KBM-7 (cell line): ENCODE measurements at regions of chr15 and their contacts with region 1.

Region 1: GRCh38 chr15:90648137-90649070 is 68.7 kb upstream of the BLM start:
- DNase-seq: peak; percentile 97

Region 2: DNA sequence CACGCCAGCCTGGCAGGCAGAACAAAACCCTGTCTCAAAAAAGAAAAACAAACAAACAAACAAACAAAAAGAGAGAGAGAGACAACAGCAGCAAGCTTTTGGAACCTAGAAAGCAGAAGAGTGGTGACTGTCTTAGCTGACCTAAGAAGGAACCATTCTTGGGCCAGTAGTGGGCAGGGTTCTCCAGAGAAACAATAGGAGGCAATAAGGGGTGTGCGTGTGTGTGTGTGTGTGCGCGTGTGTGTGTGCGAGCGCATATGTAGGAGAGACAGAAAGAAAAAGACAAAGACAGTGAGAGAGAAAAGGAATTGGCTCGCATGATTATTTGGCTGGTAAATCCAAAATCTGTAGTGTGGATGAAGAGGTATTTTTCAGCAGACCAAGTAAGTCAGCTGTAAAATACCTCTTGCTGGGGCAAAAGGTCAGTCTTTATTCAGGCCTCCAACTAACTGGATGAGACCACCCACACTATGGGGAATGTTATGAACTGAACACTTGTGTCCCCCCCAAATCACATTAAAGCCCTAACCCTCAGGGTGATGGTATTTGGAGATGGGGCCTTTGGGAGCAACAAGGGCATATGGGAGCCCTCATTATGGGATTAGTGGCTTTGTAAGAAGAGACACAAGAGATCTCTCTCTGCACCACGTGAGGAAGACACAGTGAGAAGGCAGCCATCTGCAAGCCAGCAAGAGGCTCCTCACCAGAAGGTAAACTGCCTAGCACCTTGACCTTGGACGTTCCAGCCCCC is 53.7 kb after region 1 on chr15:
- in situ Hi-C with region 1: no loop called
- DNase-seq: peak; percentile 73

Region 3: DNA sequence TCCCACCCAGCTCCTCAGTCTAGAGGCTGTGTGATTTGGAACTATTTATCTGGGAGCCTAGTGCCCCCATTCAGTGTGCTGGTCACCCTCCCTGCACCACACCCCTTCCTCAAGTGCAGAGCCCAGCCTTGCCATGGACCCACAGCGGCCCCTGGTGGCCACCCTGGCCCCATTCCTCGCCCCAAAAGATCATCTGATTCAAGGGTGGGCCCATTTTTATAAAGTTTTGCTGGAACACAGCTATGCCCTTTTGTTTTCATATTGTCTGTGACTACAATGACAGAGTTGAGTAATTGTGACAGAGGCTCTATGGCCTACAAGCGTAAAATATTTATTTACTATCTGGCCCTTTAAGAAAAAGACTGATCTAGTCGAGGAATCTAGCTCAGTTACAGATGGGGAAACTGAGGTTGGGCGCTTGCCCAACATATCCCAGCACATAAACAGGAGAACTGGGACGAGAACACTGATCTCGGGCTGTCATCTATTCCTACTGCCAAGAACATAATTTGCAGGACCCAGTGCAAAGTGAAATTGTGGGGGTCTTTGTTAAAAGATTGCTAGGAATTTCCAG is 237.7 kb after region 1 on chr15:
- in situ Hi-C with region 1: loop called (anchors 25 kb)
- DNase-seq: peak; percentile 86